ENCODE measurements at regions of chr22 and their contacts with region 1.

Region 1: GRCh38 chr22:22103078-22103875 is 120.7 kb upstream of the TOP3B start:
- DNase-seq: peak; percentile 86 to 97 (median 93)
- ATAC-seq: peak; percentile 87
- H3K4me3 ChIP-seq: no peak overlapping the region
- H3K27ac ChIP-seq: no peak overlapping the region
- H3K4me1 ChIP-seq: peaks cover 0 to 2% of the 10 kb centered on the region in 2 experiments; a peak in 2 of 5 replicates
- H3K27me3 ChIP-seq: peaks cover 21 to 37% of the 10 kb centered on the region in 2 experiments
- CTCF ChIP-seq: no peak
- EP300 ChIP-seq: no peak
- POLR2A ChIP-seq: no peak
- RAD21 ChIP-seq: no peak

Region 2: GRCh38 chr22:22085702-22086500 is 17.4 kb before region 1 on chr22:
- CTCF ChIA-PET with region 1: no interaction called
- POLR2A ChIA-PET with region 1: interaction called, 98 read pairs
- in situ Hi-C with region 1: no loop called
- intact Hi-C with region 1: no loop called
- DNase-seq: peak in 2 of 4 experiments; percentile 68 to 76
- ATAC-seq: peak; percentile 68
- H3K4me3 ChIP-seq: no peak overlapping the region
- H3K27ac ChIP-seq: no peak overlapping the region
- H3K4me1 ChIP-seq: no peaks in the 10 kb centered on the region
- H3K27me3 ChIP-seq: peaks cover 53 to 55% of the 10 kb centered on the region in 2 experiments
- CTCF ChIP-seq: peak in 1 of 3 experiments; percentile 8; a peak in 1 of 6 replicates
- EP300 ChIP-seq: peak; percentile 10; the same call in 1 of the 2 replicates
- POLR2A ChIP-seq: no peak
- RAD21 ChIP-seq: no peak

Region 3: GRCh38 chr22:22123118-22123959 is 20.1 kb after region 1 on chr22:
- CTCF ChIA-PET with region 1: no interaction called
- POLR2A ChIA-PET with region 1: interaction called, 10 read pairs
- in situ Hi-C with region 1: no loop called
- intact Hi-C with region 1: no loop called
- DNase-seq: peak in 1 of 4 experiments; percentile 38
- ATAC-seq: peak; percentile 51
- H3K4me3 ChIP-seq: no peak overlapping the region
- H3K27ac ChIP-seq: no peak overlapping the region
- H3K4me1 ChIP-seq: peaks cover 0 to 18% of the 10 kb centered on the region in 2 experiments; a peak in 1 of 5 replicates
- H3K27me3 ChIP-seq: peaks cover 35 to 36% of the 10 kb centered on the region in 2 experiments
- CTCF ChIP-seq: no peak
- EP300 ChIP-seq: no peak
- POLR2A ChIP-seq: no peak
- RAD21 ChIP-seq: no peak

Region 4: DNA sequence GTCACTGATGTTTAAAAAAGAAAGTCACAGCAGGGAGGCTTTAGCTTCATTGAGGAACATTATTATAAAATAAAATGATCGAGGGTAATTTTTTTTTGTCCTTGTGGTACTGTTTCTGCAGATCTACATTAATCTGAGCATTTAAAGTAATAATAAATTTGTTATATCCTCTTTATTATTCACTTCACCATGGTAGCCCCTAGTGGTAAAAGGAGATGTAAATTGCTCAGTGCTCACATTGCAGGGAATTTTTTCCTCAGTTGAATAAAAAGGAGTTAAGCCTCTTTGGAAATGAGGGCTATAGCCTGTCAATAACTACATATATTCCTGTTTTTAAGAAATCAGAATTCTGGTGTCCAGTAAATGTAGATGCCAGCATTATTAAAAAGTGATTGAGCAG is 41.6 kb after region 1 on chr22:
- CTCF ChIA-PET with region 1: no interaction called
- POLR2A ChIA-PET with region 1: interaction called, 5 read pairs
- in situ Hi-C with region 1: no loop called
- intact Hi-C with region 1: loop called (anchors 2 kb)
- DNase-seq: no peak
- ATAC-seq: peak; percentile 26; the same call in 1 of the 3 replicates
- H3K4me3 ChIP-seq: no peak overlapping the region
- H3K27ac ChIP-seq: no peak overlapping the region
- H3K4me1 ChIP-seq: peaks cover 0 to 11% of the 10 kb centered on the region in 2 experiments; a peak in 2 of 5 replicates
- H3K27me3 ChIP-seq: peaks cover 10 to 18% of the 10 kb centered on the region in 2 experiments
- CTCF ChIP-seq: no peak
- EP300 ChIP-seq: no peak
- POLR2A ChIP-seq: no peak
- RAD21 ChIP-seq: no peak

Region 5: DNA sequence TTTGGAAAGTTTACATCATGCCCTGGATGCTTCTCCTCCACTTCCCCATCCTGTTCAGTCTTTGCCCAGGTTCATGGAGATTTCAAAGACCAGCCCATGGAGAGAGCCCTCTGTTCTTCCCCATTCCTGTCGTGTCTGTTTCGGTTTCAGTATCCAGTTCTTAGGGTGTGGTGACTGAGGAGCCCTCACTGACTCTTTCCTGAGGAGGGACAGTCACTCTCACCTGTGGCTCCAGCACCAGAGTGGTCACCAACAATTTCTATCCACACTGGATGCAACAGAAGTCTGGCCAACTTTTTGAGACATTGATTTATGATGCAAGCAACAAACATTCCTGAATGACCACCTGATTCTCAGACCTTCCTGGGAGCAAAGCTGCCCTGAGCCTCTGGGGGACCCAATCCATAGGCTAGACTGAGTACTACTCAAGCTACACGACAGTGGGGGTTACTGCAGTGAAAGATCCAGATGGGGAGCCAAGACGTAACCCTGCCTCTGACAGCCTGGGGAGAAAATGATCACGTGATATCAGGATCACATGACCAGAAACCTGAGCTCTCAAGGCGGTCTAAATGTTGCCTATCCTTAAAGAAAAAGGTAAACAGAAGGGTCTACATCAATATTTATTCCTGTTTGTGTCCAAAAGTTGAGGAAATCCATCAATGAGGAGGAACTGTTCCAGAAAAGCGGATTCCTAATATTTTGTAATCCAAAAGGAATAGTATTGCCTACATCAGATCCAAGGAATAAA is 65.1 kb after region 1 on chr22:
- CTCF ChIA-PET with region 1: no interaction called
- POLR2A ChIA-PET with region 1: no interaction called
- in situ Hi-C with region 1: no loop called
- intact Hi-C with region 1: loop called (anchors 2 kb)
- DNase-seq: peak; percentile 74 to 98 (median 90)
- ATAC-seq: peak; percentile 65
- H3K4me3 ChIP-seq: peak overlapping the region; percentile 3; the same call in 1 of the 2 replicates
- H3K27ac ChIP-seq: no peak overlapping the region
- H3K4me1 ChIP-seq: peaks cover 0 to 3% of the 10 kb centered on the region in 2 experiments; a peak in 1 of 5 replicates
- H3K27me3 ChIP-seq: peaks cover 0 to 21% of the 10 kb centered on the region in 2 experiments; a peak in 2 of 5 replicates
- CTCF ChIP-seq: no peak
- EP300 ChIP-seq: no peak
- POLR2A ChIP-seq: no peak
- RAD21 ChIP-seq: no peak

Region 6: GRCh38 chr22:22243033-22243680 is 139.9 kb after region 1 on chr22:
- CTCF ChIA-PET with region 1: no interaction called
- POLR2A ChIA-PET with region 1: no interaction called
- in situ Hi-C with region 1: no loop called
- intact Hi-C with region 1: no loop called
- DNase-seq: no peak
- ATAC-seq: no peak; the same call in 1 of the 3 replicates
- H3K4me3 ChIP-seq: no peak overlapping the region
- H3K27ac ChIP-seq: no peak overlapping the region
- H3K4me1 ChIP-seq: no peaks in the 10 kb centered on the region
- H3K27me3 ChIP-seq: peaks cover 74 to 92% of the 10 kb centered on the region in 2 experiments
- CTCF ChIP-seq: no peak
- EP300 ChIP-seq: no peak
- POLR2A ChIP-seq: no peak
- RAD21 ChIP-seq: no peak

Region 7: GRCh38 chr22:22463855-22464540 is 360.7 kb after region 1 on chr22:
- CTCF ChIA-PET with region 1: no interaction called
- POLR2A ChIA-PET with region 1: no interaction called
- in situ Hi-C with region 1: no loop called
- intact Hi-C with region 1: no loop called
- DNase-seq: peak; percentile 97 to 99 (median 99)
- ATAC-seq: peak; percentile 97
- H3K4me3 ChIP-seq: no peak overlapping the region
- H3K27ac ChIP-seq: no peak overlapping the region
- H3K4me1 ChIP-seq: peaks cover 0 to 2% of the 10 kb centered on the region in 2 experiments; a peak in 1 of 5 replicates
- H3K27me3 ChIP-seq: peaks cover 13 to 18% of the 10 kb centered on the region in 2 experiments; a peak in 4 of 5 replicates
- CTCF ChIP-seq: peak in 2 of 3 experiments; percentile 100; a peak in 4 of 6 replicates
- EP300 ChIP-seq: no peak; the same call in 1 of the 2 replicates
- POLR2A ChIP-seq: no peak
- RAD21 ChIP-seq: peak in 1 of 2 experiments; percentile 100; a peak in 2 of 4 replicates

Measured in K562 (cell line).